ENCODE measurements at regions of chr22 and their contacts with region 1.

Region 1: DNA sequence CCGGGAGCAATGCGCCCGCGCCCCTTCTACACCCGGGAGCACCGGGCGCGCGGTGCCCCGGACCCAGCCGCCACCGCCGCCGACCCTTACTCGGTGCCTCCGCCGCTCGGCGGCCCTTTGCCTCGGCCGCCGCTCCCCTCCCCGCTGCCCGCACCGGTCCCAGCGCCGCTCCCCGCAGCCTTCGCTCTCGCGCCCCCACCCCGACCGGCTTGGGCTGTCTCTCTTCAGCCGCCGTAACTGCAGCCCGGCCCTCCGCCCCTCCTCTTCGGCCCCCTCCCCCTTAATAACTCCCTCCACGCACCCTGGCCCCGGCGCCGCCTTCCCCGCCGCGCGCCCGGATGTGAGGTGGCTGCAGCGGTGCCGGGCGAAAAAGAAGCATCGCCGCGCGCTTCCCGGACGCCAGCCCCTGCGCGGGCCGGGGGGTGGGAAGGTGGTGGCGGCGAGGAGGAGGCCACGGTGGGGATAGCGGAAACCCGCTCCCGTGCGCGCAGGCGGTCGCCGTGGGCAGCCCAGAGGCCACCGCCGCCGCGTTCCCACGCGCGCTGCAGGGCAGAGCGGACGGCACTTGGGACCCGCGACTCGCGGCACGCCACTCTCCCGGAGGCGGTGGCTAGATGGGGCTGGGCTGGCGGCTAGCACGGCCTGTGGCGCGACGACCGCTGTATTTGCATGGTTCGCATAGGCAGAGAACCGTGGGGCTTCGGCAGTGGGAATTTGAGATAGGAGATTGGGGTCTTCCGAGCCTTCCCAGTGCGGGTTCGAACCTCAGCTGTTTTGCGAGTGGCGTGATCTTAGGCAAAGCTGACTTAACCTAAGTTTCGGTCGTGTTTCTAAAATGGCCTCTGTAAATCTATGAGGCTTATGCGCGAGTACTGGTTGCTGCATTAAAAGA is at the start of gene EIF4ENIF1:
- DNase-seq: peak; percentile 82 to 98 (median 86)

Region 2: GRCh38 chr22:31399211-31400028 is 90.4 kb before region 1 on chr22 and contains the start of gene DRG1:
- intact Hi-C with region 1: loop called (anchors 10 kb)
- DNase-seq: peak; percentile 97 to 100 (median 98)

Measured in posterior cingulate gyrus (tissue), 11 donors.